PC-9 (cell line): ENCODE measurements at regions of chr3 and their contacts with region 1.

Region 1: DNA sequence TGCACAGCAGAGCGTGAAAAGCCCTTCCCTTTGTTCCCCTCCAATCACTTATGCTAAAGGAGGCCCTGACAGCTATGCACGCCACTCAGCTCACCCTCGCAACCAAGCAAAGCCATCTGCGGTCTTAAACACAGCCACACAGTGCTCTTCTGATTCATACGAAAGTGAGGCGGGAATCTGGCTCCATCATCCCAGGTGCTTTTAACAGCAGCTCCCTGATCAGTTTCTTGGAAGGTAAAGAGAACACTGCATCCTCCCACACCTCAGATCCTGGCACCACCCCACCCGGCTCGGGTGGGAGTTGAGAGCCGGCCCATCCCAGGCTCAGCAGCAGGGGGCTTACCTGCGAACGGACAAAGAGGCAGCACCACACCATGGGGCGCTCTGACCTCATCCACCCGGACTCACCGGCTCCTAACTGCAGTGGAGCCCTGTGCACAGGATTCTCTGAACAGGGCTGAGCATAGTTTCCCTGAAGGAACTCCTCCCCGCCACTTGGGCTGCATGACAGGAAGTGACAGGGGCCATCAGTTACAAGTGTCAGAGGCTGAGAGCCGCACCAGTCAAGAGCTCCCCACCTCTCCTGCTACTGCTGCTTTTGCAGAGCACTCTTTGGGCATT is 114.3 kb upstream of the ARHGEF3 start:
- DNase-seq: no peak
- H3K4me3 ChIP-seq: no peak overlapping the region
- H3K27ac ChIP-seq: no peak overlapping the region
- H3K4me1 ChIP-seq: no peaks in the 10 kb centered on the region
- H3K27me3 ChIP-seq: no peaks in the 10 kb centered on the region
- CTCF ChIP-seq: no peak

Region 2: GRCh38 chr3:56904552-56905215 is 11.4 kb before region 1 on chr3:
- CTCF ChIA-PET with region 1: interaction called, 11 read pairs
- POLR2A ChIA-PET with region 1: no interaction called
- intact Hi-C with region 1: no loop called
- DNase-seq: no peak
- H3K4me3 ChIP-seq: no peak overlapping the region
- H3K27ac ChIP-seq: no peak overlapping the region
- H3K4me1 ChIP-seq: no peaks in the 10 kb centered on the region
- H3K27me3 ChIP-seq: no peaks in the 10 kb centered on the region
- CTCF ChIP-seq: no peak